ENCODE measurements at regions of chr4 and their contacts with region 1.

Region 1: GRCh38 chr4:47737326-47737725 is 100.5 kb downstream of the CORIN start:
- DNase-seq: no peak
- H3K4me3 ChIP-seq: no peak overlapping the region
- H3K27ac ChIP-seq: no peak overlapping the region
- H3K4me1 ChIP-seq: no peaks in the 10 kb centered on the region
- H3K27me3 ChIP-seq: peaks cover 12% of the 10 kb centered on the region
- CTCF ChIP-seq: no peak

Region 2: DNA sequence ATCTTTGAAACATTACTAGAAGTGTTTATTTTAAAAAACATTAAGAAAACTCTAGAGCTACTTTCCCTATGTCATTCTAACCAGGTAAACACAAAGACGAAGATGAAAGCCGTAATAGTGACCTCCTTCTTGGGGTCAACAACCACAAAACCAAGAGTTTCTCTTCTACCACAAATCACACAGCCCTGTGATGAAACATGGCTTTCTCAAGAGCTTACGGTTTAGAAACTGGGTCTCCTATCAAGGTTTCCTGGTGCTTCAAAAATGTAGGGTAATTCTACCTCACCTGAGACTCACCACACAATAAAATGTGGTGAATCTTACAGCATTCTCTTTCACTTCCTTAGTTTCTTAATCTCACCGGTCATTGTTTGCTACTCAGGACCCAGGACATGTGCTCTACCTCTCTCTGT is 49.6 kb after region 1 on chr4:
- CTCF ChIA-PET with region 1: no interaction called
- dilution Hi-C with region 1: loop called (anchors 5 kb)
- in situ Hi-C with region 1: no loop called
- intact Hi-C with region 1: no loop called
- DNase-seq: no peak
- H3K4me3 ChIP-seq: no peak overlapping the region
- H3K27ac ChIP-seq: no peak overlapping the region
- H3K4me1 ChIP-seq: no peaks in the 10 kb centered on the region
- H3K27me3 ChIP-seq: no peaks in the 10 kb centered on the region
- CTCF ChIP-seq: no peak